ENCODE measurements at regions of chr7 and their contacts with region 1.

Region 1: GRCh38 chr7:29449569-29450271 is 113.9 kb upstream of the PRR15 start:
- DNase-seq: peak; percentile 81
- ATAC-seq: peak; percentile 95
- H3K4me3 ChIP-seq: no peak overlapping the region; the same call in 1 of the 2 replicates
- H3K27ac ChIP-seq: peak overlapping the region; percentile 71
- H3K4me1 ChIP-seq: peaks cover 32% of the 10 kb centered on the region
- H3K27me3 ChIP-seq: no peaks in the 10 kb centered on the region
- CTCF ChIP-seq: no peak

Region 2: GRCh38 chr7:29435167-29435566 is 14.6 kb before region 1 on chr7:
- CTCF ChIA-PET with region 1: no interaction called
- POLR2A ChIA-PET with region 1: no interaction called
- intact Hi-C with region 1: no loop called
- DNase-seq: peak; percentile 12
- ATAC-seq: no peak
- H3K4me3 ChIP-seq: no peak overlapping the region
- H3K27ac ChIP-seq: no peak overlapping the region
- H3K4me1 ChIP-seq: no peaks in the 10 kb centered on the region
- H3K27me3 ChIP-seq: no peaks in the 10 kb centered on the region
- CTCF ChIP-seq: no peak

Region 3: DNA sequence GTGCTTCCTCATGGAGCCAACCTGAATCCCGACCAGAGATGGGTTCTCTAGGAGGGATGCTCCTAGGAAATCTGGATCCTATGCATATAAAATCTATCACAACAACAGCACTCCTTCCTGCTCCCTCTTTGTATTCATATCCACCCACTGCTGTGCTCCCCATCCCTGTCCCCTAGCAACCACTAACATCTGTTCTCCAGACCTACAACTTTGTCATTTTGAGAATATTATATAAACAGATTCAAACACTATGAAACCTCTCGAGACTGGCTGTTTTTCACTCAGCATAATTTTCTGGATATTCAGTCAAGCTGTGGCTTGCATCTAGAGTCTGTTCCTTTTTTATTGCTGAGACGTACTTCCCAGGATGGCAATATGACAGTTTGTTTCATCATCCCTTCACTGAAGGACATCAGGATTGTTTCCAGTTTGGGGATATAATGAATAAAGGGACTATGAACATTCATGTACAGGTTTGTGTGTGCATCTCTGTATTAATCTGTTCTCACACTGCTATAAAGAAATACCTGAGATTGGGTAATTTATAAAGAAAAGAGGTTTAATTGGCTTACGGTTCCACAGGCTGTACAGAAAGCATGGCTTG is 77.9 kb after region 1 on chr7:
- CTCF ChIA-PET with region 1: no interaction called
- POLR2A ChIA-PET with region 1: no interaction called
- intact Hi-C with region 1: no loop called
- DNase-seq: no peak
- ATAC-seq: no peak
- H3K4me3 ChIP-seq: no peak overlapping the region
- H3K27ac ChIP-seq: no peak overlapping the region
- H3K4me1 ChIP-seq: no peaks in the 10 kb centered on the region
- H3K27me3 ChIP-seq: no peaks in the 10 kb centered on the region
- CTCF ChIP-seq: no peak

Region 4: GRCh38 chr7:29622335-29623265 is 172.9 kb after region 1 on chr7:
- CTCF ChIA-PET with region 1: no interaction called
- POLR2A ChIA-PET with region 1: no interaction called
- intact Hi-C with region 1: loop called (anchors 1 kb)
- DNase-seq: peak; percentile 94
- ATAC-seq: peak; percentile 88
- H3K4me3 ChIP-seq: peak overlapping the region; percentile 45
- H3K27ac ChIP-seq: peak overlapping the region; percentile 80
- H3K4me1 ChIP-seq: peaks cover 43% of the 10 kb centered on the region
- H3K27me3 ChIP-seq: no peaks in the 10 kb centered on the region
- CTCF ChIP-seq: peak; percentile 23; the same call in 1 of the 2 replicates

Measured in PC-3 (cell line).